ENCODE measurements at regions of chr2 and their contacts with region 1.

Region 1: DNA sequence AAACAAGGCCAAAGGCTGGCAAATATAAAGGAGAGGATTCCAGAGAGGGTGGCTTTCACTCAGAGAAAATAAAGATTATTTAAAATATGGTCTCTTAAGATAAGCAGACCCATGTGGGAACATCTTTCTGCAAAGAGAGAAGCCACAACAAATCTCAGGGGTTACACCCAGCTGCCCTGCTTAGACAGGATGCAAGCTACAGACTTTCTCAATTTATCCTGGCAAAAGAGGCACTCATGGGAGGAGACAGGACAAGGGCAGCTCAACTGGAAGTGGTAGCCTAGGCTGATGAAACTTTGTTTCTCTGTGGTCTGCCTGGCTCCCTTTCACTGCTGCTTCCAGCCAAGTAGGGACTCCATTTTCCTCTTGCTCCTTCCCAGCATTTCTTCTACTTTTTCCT is 25.9 kb upstream of the SULT1C4 start:
- DNase-seq: no peak
- H3K4me3 ChIP-seq: no peak overlapping the region
- CTCF ChIP-seq: no peak

Region 2: GRCh38 chr2:108297436-108298141 is 54.3 kb before region 1 on chr2:
- in situ Hi-C with region 1: no loop called
- DNase-seq: peak; percentile 59
- H3K4me3 ChIP-seq: no peak overlapping the region
- CTCF ChIP-seq: no peak

Region 3: GRCh38 chr2:108392029-108392428 is 40.1 kb after region 1 on chr2:
- in situ Hi-C with region 1: loop called (anchors 5 kb)
- DNase-seq: no peak
- H3K4me3 ChIP-seq: no peak overlapping the region
- CTCF ChIP-seq: no peak

Region 4: GRCh38 chr2:108436976-108437375 is 85.1 kb after region 1 on chr2:
- in situ Hi-C with region 1: no loop called
- DNase-seq: no peak
- H3K4me3 ChIP-seq: no peak overlapping the region
- CTCF ChIP-seq: no peak

Measured in astrocyte of the cerebellum (primary cell).